H1 (cell line): ENCODE measurements at regions of chr10 and their contacts with region 1.

Region 1: DNA sequence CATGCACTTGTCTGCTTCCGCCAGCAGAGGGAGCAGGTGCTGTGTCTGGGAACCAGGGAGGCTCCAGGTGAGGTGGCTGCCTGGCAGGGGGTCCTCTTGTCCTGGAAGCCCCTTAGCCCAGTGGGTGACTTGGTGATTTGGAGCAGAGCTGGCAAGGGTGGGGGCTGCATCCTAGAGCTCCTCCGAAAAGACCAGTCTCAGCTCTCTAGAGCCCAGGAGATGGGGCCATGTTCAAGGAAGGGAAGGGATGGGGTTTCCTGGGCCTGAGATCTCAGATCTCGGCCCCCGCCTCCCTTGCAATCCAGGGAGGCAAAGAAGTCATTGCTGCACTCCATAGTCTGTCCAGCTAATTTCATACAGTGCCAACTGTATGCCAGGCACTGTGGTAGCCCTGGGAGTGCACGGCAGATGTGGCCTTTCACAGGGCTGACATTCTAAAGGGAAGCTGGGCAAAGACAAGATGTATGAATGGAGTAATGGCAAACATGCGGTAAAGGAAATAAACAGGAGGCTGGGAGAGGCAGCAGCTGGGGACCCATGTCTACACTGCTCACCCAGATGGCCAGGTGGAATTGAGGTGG is 20.4 kb upstream of the SFRP5 start:
- DNase-seq: peak; percentile 58 to 94
- H3K4me3 ChIP-seq: no peak overlapping the region
- H3K27ac ChIP-seq: no peak overlapping the region
- H3K4me1 ChIP-seq: peaks cover 0 to 5% (median 2%) of the 10 kb centered on the region in 4 experiments; a peak in 3 of 7 replicates
- H3K27me3 ChIP-seq: no peaks in the 10 kb centered on the region
- CTCF ChIP-seq: peak; percentile 95 to 97 (median 96)
- EP300 ChIP-seq: no peak
- POLR2A ChIP-seq: no peak
- RAD21 ChIP-seq: peak; percentile 93 to 95

Region 2: DNA sequence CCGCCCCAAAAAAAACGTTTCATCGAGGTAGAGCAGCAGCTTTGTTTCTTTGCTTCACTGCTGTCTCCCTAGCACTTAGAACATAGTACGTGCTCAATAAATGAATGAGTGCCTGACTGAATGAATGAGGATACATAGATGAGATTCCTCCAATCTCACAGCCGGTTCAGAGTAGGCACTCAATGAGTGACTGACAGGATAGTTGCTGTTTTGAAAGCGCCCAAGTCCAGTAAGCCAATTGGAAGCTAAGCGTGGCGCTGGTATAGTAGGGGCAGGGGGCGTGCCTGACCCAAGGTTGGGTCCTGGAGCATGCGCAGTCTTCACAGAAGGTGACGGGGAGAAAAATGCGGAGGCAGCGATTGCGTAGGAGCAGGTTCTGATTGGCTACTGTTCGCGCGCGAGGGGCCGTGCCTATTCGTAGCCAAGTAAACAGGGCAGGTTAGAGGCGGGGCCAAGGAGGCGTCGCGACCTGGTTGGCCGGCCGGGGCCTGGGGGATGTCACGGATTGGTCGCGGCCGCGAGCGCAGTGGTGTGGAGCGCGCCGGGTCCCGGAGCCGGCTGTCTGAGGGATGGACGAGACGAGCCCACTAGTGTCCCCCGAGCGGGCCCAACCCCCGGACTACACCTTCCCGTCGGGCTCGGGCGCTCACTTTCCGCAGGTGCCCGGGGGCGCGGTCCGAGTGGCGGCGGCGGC is 151.9 kb before region 1 on chr10 and contains the start of gene PI4K2A:
- CTCF ChIA-PET with region 1: no interaction called
- POLR2A ChIA-PET with region 1: no interaction called
- DNase-seq: peak; percentile 98 to 99
- H3K4me3 ChIP-seq: peak within 1 kb of the TSS; percentile 61 to 90 (median 71)
- H3K27ac ChIP-seq: peak within 1 kb of the TSS; percentile 86; the same call in 1 of the 2 replicates
- H3K4me1 ChIP-seq: peaks cover 0 to 9% (median 3%) of the 10 kb centered on the region in 4 experiments; a peak in 4 of 7 replicates
- H3K27me3 ChIP-seq: no peaks in the 10 kb centered on the region
- CTCF ChIP-seq: no peak
- EP300 ChIP-seq: no peak
- POLR2A ChIP-seq: peak in 1 of 2 experiments; percentile 86; a peak in 1 of 3 replicates
- RAD21 ChIP-seq: no peak
- total RNA-seq, gene PI4K2A: 21.9 and 22.9 TPM in 2 replicates

Region 3: DNA sequence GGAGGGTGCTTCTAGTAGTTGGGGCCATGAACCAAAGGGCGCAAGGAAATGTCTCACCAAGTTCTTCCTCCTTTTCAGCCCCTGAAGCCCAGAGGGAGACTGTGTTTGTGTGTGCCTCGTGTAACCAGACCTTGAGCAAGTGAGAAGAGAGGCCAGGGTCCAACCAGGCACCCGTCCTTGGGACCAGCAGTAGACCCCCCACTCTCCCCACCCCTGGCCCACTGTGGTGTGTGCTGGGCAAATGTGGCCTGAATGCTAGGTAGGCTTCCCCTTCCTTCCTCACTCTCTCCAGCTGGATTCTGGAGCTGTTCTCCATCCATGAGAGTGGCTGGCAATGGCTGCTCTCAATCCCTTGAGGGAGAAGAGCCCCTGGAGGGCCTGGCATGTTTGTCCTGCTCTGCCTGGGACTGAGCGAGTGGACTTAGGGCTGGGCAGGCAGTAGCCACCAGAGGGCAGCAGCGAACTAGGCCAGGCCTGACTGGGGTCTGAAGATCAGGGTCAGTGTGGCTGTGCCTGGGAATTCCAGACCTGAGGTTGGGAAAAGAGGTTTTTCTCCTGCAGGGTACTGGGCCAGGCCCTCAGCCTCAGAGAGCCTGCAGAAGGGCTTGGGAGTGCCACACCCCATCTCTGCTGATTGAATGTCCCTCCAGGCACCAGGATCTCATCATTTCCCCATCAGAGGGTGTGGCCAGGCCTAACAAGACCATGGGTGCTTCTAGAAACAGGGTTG is 32.9 kb before region 1 on chr10:
- CTCF ChIA-PET with region 1: interaction called, 23 read pairs
- POLR2A ChIA-PET with region 1: no interaction called
- DNase-seq: peak; percentile 76 to 95
- H3K4me3 ChIP-seq: no peak overlapping the region
- H3K27ac ChIP-seq: no peak overlapping the region
- H3K4me1 ChIP-seq: peaks cover 0 to 14% (median 6%) of the 10 kb centered on the region in 4 experiments; a peak in 6 of 7 replicates
- H3K27me3 ChIP-seq: no peaks in the 10 kb centered on the region
- CTCF ChIP-seq: peak; percentile 96 to 99 (median 99)
- EP300 ChIP-seq: no peak
- POLR2A ChIP-seq: no peak
- RAD21 ChIP-seq: peak; percentile 95 to 97

Region 4: GRCh38 chr10:97780841-97781617 is 11.2 kb before region 1 on chr10:
- CTCF ChIA-PET with region 1: interaction called, 98 read pairs
- POLR2A ChIA-PET with region 1: no interaction called
- DNase-seq: no peak
- H3K4me3 ChIP-seq: no peak overlapping the region
- H3K27ac ChIP-seq: no peak overlapping the region
- H3K4me1 ChIP-seq: peaks cover 0 to 14% (median 5%) of the 10 kb centered on the region in 4 experiments; a peak in 6 of 7 replicates
- H3K27me3 ChIP-seq: no peaks in the 10 kb centered on the region
- CTCF ChIP-seq: no peak
- EP300 ChIP-seq: no peak
- POLR2A ChIP-seq: no peak
- RAD21 ChIP-seq: peak in 1 of 2 experiments; percentile 1; a peak in 1 of 4 replicates

Region 5: DNA sequence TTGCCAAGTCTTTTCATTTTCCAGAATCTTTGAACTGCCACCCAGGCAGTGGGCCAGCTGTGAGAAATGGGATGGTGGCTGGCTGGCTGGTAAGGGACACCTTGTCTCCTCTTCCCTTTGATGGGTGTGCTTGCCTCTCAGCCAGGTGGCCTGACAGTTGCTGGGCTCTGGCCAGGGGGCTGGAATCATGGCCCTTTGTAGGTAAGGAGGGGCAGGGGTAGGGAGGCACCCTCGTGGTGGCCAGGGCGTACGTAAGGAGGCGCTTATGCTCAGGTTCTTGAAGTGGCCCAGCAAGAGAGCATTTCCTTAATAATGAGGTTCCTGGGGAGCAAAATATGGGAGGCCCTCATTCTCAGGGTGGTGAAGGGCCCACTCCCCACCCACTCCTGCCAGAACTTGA is 24.4 kb after region 1 on chr10:
- CTCF ChIA-PET with region 1: interaction called, 12 read pairs
- POLR2A ChIA-PET with region 1: no interaction called
- DNase-seq: no peak
- H3K4me3 ChIP-seq: no peak overlapping the region
- H3K27ac ChIP-seq: no peak overlapping the region
- H3K4me1 ChIP-seq: peaks cover 0 to 7% (median 3%) of the 10 kb centered on the region in 4 experiments; a peak in 3 of 7 replicates
- H3K27me3 ChIP-seq: no peaks in the 10 kb centered on the region
- CTCF ChIP-seq: no peak
- EP300 ChIP-seq: no peak
- POLR2A ChIP-seq: no peak
- RAD21 ChIP-seq: no peak

Region 6: DNA sequence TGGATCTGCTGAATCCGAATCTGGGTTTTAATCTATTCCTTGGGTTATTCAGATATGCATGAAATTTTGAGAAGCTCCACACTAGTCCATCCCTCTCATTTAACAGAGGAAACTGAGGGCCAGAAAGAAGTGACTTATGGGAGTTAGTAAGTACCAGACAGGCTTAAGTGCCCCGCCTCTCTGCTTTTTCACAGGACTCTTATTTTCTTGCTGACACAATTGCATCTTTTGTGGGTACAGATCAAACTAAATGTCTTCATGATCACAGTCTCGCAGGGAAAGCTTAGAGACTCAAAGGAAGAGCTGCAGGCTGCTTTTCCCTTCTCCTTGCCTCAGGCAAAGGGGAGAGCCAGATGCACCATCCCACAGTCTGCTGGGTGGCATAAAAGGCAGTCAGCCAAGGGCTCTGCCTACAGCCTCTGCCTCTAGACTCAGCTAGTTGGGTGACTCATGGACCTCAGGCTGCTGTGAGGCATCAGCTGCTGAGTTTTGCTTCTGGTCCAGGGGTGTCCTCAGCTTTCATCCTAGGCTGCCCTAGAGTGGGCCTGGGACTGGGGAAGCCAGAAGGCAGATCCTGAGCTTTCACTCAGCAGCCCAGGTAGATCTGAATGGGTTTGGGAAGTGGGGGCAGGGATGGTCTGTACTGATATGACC is 69.0 kb after region 1 on chr10:
- CTCF ChIA-PET with region 1: interaction called, 236 read pairs
- POLR2A ChIA-PET with region 1: no interaction called
- DNase-seq: no peak
- H3K4me3 ChIP-seq: no peak overlapping the region; a peak in 2 of 8 replicates
- H3K27ac ChIP-seq: no peak overlapping the region
- H3K4me1 ChIP-seq: peaks cover 5 to 13% (median 7%) of the 10 kb centered on the region in 4 experiments
- H3K27me3 ChIP-seq: no peaks in the 10 kb centered on the region
- CTCF ChIP-seq: no peak
- EP300 ChIP-seq: no peak
- POLR2A ChIP-seq: no peak
- RAD21 ChIP-seq: no peak

Region 7: DNA sequence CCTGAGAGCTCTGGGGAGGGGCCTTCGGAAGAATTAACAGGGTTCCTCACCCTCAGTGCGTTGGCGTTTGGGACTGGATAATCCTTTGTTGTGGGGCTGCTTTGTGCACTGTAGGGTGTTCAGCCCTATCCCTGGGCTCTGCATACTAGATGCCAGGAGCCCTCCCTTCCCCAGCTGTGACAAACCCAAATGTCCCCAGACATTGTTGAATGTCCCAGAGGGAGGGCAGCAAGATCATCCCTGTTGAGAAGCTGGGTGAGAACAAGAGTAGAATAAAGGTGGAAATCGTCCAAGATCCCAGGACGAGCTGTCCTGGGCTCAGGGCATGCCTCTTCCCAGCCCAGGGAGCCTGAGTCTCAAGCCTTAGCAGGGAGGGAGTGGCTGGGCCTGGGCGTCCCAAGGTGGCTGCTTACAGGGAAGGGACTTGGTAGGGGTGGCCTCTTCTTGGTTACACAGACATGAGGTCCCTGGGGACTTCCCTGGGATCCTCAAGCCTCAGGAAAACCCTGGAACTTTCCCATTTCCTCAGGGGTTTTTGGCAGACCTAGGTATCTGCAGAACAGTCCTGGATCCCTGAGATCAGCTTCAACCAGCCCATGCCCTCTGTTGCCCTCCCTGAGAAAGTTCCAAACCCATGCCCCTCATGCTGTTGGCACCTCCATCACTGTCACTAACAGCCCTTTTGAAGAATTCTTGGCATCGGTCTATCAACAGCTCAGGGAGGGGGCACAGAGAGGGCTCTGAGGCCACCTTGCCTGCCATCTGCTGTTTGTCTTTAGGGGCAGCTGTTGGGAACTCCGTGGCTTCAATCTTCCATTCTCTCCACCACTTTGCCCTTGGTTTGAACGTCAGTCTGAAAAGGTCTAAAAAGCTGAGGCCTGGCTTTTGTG is 111.1 kb after region 1 on chr10:
- CTCF ChIA-PET with region 1: interaction called, 27 read pairs
- POLR2A ChIA-PET with region 1: no interaction called
- DNase-seq: no peak
- H3K4me3 ChIP-seq: no peak overlapping the region
- H3K27ac ChIP-seq: no peak overlapping the region
- H3K4me1 ChIP-seq: peaks cover 0 to 4% (median 1%) of the 10 kb centered on the region in 4 experiments; a peak in 3 of 7 replicates
- H3K27me3 ChIP-seq: no peaks in the 10 kb centered on the region; a peak in 2 of 7 replicates
- CTCF ChIP-seq: peak in 1 of 3 experiments; percentile 12; a peak in 1 of 4 replicates
- EP300 ChIP-seq: no peak
- POLR2A ChIP-seq: no peak
- RAD21 ChIP-seq: peak in 1 of 2 experiments; percentile 43; a peak in 2 of 4 replicates

Region 8: GRCh38 chr10:98028168-98028770 is 236.0 kb after region 1 on chr10:
- CTCF ChIA-PET with region 1: interaction called, 13 read pairs
- POLR2A ChIA-PET with region 1: no interaction called
- DNase-seq: peak; percentile 34 to 89
- H3K4me3 ChIP-seq: no peak overlapping the region
- H3K27ac ChIP-seq: no peak overlapping the region
- H3K4me1 ChIP-seq: peaks cover 2 to 7% (median 6%) of the 10 kb centered on the region in 4 experiments; a peak in 5 of 7 replicates
- H3K27me3 ChIP-seq: peaks cover 40 to 50% (median 49%) of the 10 kb centered on the region in 4 experiments
- CTCF ChIP-seq: peak; percentile 86 to 98 (median 97)
- EP300 ChIP-seq: no peak
- POLR2A ChIP-seq: no peak
- RAD21 ChIP-seq: peak; percentile 81 to 91